ENCODE measurements at regions of chr17 and their contacts with region 1.

Region 1: DNA sequence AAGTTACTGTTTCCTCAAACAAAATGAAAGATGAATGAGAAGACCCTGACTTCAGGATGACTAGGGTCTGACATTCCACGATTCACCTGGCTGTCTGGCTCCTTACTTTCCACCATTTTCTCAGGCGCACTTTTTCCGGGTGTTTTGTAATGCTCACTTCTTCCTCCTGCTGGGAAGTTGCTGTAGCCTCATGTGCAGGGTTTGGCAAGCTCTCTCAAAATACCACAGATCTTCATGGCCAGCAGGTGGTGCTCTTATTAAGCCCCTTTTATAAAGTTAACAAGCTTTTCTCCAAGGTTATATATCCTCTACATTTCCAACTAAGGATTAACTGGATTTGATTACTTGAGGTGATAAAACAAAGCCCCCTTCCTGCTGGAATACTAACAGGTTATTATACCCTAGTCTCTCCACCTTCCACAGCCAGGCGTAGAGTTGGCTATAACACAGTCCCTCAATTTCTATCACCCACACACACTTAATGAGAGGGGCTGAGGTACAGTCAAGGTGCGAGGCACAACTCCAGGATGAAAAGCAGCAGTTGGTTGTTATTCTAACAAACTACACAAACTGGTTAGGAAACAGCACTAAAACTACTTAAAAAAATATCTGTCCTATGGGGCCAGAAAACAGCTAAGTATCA is 45.4 kb downstream of the STH start:
- DNase-seq: peak; percentile 69
- ATAC-seq: no peak
- H3K4me3 Mint-ChIP-seq: no peak overlapping the region
- H3K27ac Mint-ChIP-seq: peak overlapping the region; percentile 6
- H3K4me1 Mint-ChIP-seq: peaks cover 9% of the 10 kb centered on the region
- H3K27me3 Mint-ChIP-seq: no peaks in the 10 kb centered on the region

Region 2: GRCh38 chr17:46002311-46002972 is 42.0 kb before region 1 on chr17:
- CTCF ChIA-PET with region 1: interaction called, 30 read pairs
- DNase-seq: peak; percentile 80
- ATAC-seq: peak; percentile 94
- H3K4me3 Mint-ChIP-seq: no peak overlapping the region
- H3K27ac Mint-ChIP-seq: no peak overlapping the region
- H3K4me1 Mint-ChIP-seq: peaks cover 3% of the 10 kb centered on the region
- H3K27me3 Mint-ChIP-seq: no peaks in the 10 kb centered on the region

Region 3: GRCh38 chr17:46056800-46057304 is 12.4 kb after region 1 on chr17:
- CTCF ChIA-PET with region 1: interaction called, 19 read pairs
- DNase-seq: no peak
- ATAC-seq: no peak
- H3K4me3 Mint-ChIP-seq: no peak overlapping the region
- H3K27ac Mint-ChIP-seq: no peak overlapping the region
- H3K4me1 Mint-ChIP-seq: peaks cover 26% of the 10 kb centered on the region
- H3K27me3 Mint-ChIP-seq: no peaks in the 10 kb centered on the region

Region 4: DNA sequence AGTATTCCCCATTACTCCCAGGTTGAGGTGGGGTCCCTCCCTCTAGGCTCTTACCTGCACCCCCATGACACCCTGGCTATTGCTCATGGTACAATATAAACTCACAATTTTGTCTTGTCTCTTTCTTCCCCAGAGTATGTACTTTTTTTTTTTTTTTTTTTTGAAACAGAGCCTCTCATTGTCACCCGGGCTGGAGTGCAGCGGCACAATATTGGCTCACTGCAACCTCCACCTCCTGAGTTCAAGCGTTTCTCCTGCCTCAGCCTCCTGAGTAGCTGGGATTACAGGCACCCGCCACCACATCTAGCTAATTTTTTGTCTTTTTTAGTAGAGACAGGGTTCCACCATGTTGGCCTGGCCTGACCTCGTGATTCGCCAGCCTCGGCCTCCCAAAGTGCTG is 140.3 kb after region 1 on chr17:
- CTCF ChIA-PET with region 1: interaction called, 36 read pairs
- DNase-seq: no peak
- ATAC-seq: no peak
- H3K4me3 Mint-ChIP-seq: no peak overlapping the region
- H3K27ac Mint-ChIP-seq: no peak overlapping the region
- H3K4me1 Mint-ChIP-seq: peaks cover 77% of the 10 kb centered on the region
- H3K27me3 Mint-ChIP-seq: no peaks in the 10 kb centered on the region

Region 5: DNA sequence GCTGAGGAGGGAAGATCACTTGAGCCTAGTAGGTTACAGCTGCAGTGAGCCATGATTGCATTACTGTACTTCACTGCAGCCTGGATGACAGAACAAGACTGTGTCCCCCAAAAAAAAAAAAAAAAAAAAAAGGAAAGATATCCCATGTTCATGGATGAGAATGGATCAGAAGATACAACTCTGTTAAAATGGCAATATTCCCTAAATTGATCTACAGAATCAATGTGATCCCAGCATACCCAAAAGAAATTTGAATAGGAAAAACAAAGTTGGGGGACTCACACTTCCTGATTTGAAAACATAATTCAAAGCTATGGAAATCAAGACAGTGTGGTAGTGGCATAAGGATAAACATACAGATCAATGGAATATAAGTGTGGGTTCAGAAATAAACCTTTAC is 161.6 kb after region 1 on chr17:
- CTCF ChIA-PET with region 1: interaction called, 57 read pairs
- DNase-seq: no peak
- ATAC-seq: no peak
- H3K4me3 Mint-ChIP-seq: no peak overlapping the region
- H3K27ac Mint-ChIP-seq: no peak overlapping the region
- H3K4me1 Mint-ChIP-seq: peaks cover 15% of the 10 kb centered on the region
- H3K27me3 Mint-ChIP-seq: no peaks in the 10 kb centered on the region

Measured in activated CD8-positive, alpha-beta memory T cell treated with anti-CD3 and anti-CD28 coated beads, Interleukin-2, amount 10 ng/mL, durations not matched to agents 7 days and 5 days (primary cell).